ENCODE measurements at regions of chr7 and their contacts with region 1.

Region 1: GRCh38 chr7:30594549-30595435 is at the start of gene GARS1:
- DNase-seq: peak; percentile 80 to 95 (median 87)
- ATAC-seq: peak; percentile 82
- H3K4me3 ChIP-seq: peak within 1 kb of the TSS; percentile 85
- H3K4me3 Mint-ChIP-seq: peak within 1 kb of the TSS; percentile 99
- H3K27ac ChIP-seq: peak within 1 kb of the TSS; percentile 88 to 90
- H3K27ac Mint-ChIP-seq: peak within 1 kb of the TSS; percentile 100
- H3K4me1 ChIP-seq: peaks cover 28% of the 10 kb centered on the region
- H3K4me1 Mint-ChIP-seq: peaks cover 85% of the 10 kb centered on the region
- H3K27me3 ChIP-seq: no peaks in the 10 kb centered on the region
- H3K27me3 Mint-ChIP-seq: no peaks in the 10 kb centered on the region
- CTCF ChIP-seq: no peak
- total RNA-seq, gene GARS1: 127 to 132 TPM

Region 2: DNA sequence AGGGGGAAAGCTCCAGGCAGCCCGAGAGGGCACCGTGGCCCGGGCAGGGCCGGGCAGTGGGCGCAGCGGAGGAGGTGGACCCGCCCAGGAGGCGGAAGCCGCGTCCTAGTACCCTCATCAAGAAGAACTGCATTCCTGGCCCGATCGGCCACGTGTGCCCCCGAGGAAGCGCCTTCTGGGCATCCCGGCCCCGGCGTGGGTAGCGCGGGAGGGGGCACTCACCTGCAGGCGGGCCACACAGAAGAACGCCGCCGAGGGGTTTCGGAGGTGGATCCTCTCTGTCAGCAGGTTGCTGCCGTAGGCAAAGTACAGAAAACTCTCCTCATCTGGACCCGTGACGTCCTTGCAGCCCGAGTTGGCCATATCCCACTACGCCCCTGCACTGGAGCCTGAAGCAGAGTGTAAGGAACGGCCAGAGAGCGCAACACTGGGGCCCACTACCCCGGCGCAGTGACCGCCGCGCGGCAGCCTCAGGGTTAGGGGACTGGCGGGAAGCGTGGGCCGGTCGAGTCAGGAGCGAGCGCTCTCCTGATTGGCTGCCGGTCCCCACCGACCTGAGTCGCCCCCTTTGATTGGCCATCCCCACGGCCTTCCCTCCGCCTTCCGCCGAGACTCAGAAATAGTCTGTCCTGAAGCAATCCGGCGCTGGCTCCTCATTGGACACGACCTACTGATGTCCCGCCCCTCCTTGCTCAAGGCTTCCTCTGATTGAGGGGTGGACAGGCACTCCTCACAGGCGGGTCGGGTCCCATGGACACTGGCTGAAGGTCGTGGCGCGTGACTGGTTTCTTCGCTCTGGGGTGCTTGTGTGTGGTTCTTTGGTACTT is 90.2 kb before region 1 on chr7 and contains the start of gene GGCT:
- CTCF ChIA-PET with region 1: no interaction called
- POLR2A ChIA-PET with region 1: no interaction called
- intact Hi-C with region 1: loop called in 1 of 2 experiments (anchors 2 kb)
- DNase-seq: peak; percentile 93 to 98 (median 95)
- ATAC-seq: peak; percentile 98
- H3K4me3 ChIP-seq: peak within 1 kb of the TSS; percentile 88
- H3K4me3 Mint-ChIP-seq: peak within 1 kb of the TSS; percentile 94
- H3K27ac ChIP-seq: peak within 1 kb of the TSS; percentile 42 to 57
- H3K27ac Mint-ChIP-seq: peak within 1 kb of the TSS; percentile 74
- H3K4me1 ChIP-seq: peaks cover 19% of the 10 kb centered on the region
- H3K4me1 Mint-ChIP-seq: peaks cover 29% of the 10 kb centered on the region
- H3K27me3 ChIP-seq: no peaks in the 10 kb centered on the region
- H3K27me3 Mint-ChIP-seq: no peaks in the 10 kb centered on the region
- CTCF ChIP-seq: no peak
- total RNA-seq, gene GGCT: 6.3 to 6.6 TPM

Region 3: DNA sequence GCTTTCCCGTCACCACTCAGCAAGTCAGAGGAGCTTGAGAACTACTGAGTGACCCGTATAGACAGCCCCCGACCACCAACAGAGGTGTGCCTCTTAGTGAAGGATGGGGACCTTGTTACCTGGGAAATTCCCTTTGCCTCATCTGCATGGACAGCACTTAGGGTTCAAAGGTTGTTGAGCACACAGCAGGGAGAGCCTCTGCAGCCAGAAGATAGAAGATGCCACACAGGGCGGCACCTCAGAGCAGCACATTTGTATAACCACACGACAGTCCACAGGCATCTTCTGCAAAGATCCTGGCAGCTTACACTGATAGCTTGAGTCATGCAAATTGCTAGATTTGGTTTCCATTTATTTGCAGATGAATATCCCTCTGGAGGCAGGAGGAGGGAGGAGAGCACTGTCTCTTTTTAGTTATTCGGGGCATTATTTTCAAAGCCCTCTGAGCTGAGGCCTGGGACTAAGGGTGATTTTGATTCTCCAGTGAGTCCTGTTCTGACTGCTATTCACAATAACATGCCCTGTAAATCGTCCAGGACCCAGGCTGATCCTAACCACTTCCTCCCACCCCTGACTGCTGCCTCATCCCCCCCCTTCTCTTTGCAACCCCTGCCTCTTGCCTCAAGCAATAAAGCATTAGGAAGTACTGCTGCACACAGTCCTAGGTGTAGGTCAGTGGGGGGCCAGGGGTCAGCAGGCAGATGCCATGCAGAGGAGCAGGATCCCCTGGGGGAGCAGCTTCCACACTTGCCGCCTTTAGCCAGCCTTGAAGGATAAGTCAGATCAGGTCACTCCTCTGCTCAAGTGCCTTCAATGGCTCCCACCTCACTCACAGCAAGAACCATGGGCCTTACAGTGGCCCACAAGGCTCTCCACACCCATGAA is 132.5 kb after region 1 on chr7:
- CTCF ChIA-PET with region 1: no interaction called
- POLR2A ChIA-PET with region 1: interaction called, 12 read pairs
- intact Hi-C with region 1: loop called in 1 of 2 experiments (anchors 5 kb)
- DNase-seq: peak; percentile 26 to 93 (median 56)
- ATAC-seq: peak; percentile 93
- H3K4me3 ChIP-seq: peak overlapping the region; percentile 62
- H3K4me3 Mint-ChIP-seq: peak overlapping the region; percentile 78
- H3K27ac ChIP-seq: peak overlapping the region; percentile 47 to 71
- H3K27ac Mint-ChIP-seq: peak overlapping the region; percentile 85
- H3K4me1 ChIP-seq: peaks cover 61% of the 10 kb centered on the region
- H3K4me1 Mint-ChIP-seq: peaks cover 75% of the 10 kb centered on the region
- H3K27me3 ChIP-seq: no peaks in the 10 kb centered on the region
- H3K27me3 Mint-ChIP-seq: no peaks in the 10 kb centered on the region
- CTCF ChIP-seq: no peak